Posterior vena cava (tissue), 2 donors: ENCODE measurements at regions of chr10 and their contacts with region 1.

Region 1: DNA sequence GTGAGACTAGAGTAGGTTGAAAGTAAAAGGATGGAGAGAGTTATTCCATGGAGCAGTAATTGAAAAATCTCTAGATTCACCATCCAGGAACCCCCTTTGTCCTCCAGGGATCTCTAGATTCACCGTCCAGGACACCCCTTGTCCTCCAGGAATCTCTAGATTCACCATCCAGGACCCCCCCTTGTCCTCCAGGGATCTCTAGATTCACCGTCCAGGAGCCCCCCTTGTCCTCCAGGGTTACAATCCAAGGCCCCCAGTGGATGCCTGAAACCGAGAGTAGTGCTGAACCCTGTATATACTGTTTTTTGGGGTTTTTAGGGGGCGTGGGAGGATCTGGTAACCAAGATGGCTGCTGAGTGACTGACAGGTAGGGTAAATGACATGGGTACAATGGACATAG is 38.3 kb upstream of the PPP2R2D start:
- DNase-seq: peak; percentile 62

Region 2: DNA sequence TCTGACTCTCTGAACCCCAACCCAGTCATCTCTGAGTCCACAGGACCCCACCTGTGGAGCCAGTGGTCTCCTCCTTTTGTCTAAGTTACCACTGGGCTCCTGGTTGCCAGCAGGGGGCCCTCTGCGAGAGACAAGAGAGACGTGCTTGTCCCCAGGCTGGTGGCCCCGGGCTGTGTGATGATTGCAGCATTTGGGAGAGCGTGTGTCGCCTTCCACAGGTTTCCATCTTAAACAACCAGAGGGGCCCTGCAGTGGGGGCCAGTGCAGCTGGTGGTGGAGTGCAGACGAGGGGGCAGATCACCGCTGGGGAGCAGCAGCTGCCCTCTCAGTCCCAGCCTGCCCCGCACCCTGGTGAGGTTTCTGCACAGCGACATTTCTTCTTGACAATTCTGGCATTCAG is 84.2 kb before region 1 on chr10:
- intact Hi-C with region 1: loop called in 1 of 2 experiments (anchors 1 kb)
- DNase-seq: no peak

Region 3: DNA sequence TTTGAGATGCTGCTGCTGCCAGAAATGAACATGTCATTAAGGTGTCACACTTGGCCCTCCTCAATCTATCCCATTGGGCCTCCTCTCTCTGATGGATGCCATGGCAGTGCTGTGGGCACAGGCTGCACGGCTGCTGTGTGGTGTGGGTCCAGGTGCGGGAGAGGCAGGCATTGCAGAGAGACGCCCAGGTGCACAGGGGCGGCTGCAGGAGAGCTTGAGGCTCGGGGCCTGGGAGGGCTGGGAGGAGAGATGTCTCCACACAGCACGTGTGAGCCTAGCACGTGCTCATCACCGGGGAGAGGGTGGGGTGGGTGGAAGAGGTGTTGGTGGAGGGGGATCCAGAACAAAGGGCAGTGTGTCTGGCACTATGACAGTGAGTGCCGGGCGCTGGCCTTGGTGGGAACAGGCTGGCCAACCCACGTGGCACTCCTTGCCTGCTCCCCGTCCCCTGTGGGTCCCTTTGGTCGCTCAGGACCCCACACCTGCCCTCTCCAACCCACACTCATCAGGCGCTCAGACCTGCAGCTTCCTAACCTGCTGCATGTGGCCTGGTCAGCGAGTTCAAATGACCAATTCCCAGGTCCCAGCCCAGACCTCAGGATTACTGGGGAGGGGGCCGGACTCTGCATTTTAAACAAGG is 159.1 kb after region 1 on chr10:
- intact Hi-C with region 1: no loop called
- DNase-seq: no peak